AG04450 (cell line): ENCODE measurements at regions of chr4 and their contacts with region 1.

Region 1: DNA sequence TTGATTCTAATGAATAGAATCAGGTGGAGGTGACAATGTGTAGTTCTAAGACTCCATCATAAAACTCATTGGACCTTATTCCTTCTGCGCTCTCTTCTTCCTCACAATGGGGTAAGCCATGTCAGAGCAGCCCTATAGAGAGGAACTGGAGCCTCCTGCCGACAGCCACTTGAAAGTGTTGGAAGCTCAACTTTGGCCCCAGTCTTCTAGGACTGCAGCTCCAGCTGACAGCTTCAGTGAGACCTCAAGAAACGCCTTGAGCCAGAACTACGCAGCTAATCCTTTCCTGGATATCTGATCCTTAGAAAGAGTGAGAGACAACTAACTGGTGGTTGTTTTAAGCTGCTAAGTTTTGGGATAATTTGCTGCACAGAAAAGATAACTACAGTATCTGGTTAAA is 22.1 kb upstream of the ADH7 start:
- DNase-seq: no peak
- H3K4me3 ChIP-seq: no peak overlapping the region
- H3K27ac ChIP-seq: no peak overlapping the region
- H3K27me3 ChIP-seq: peaks cover 2% of the 10 kb centered on the region
- CTCF ChIP-seq: peak; percentile 41

Region 2: DNA sequence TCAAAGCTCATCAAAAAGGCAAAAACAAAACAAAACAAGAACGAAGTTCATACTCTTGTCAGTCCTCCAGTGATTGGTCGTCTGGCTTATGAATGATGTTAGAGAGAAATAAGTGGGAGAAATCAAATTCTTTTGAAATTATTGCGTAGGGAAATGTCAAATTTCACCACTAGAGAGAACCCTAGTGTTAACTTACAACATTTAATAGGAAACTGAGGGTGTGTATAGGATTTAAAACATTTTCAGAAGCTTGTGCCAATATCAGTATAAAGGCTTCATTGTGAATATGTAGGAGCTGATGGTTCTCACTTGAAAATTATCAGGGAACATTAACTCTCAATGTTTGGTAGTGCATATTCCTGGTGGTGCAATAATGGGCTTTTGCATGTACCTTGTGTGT is 255.6 kb before region 1 on chr4:
- CTCF ChIA-PET with region 1: interaction called, 54 read pairs
- POLR2A ChIA-PET with region 1: no interaction called
- DNase-seq: no peak
- H3K4me3 ChIP-seq: no peak overlapping the region
- H3K27ac ChIP-seq: no peak overlapping the region
- H3K27me3 ChIP-seq: no peaks in the 10 kb centered on the region
- CTCF ChIP-seq: peak; percentile 45

Region 3: GRCh38 chr4:99606716-99607115 is 149.4 kb after region 1 on chr4:
- CTCF ChIA-PET with region 1: no interaction called
- POLR2A ChIA-PET with region 1: no interaction called
- DNase-seq: no peak
- H3K4me3 ChIP-seq: no peak overlapping the region
- H3K27ac ChIP-seq: no peak overlapping the region
- H3K27me3 ChIP-seq: no peaks in the 10 kb centered on the region
- CTCF ChIP-seq: no peak